PC-9 (cell line): ENCODE measurements at regions of chr11 and their contacts with region 1.

Region 1: DNA sequence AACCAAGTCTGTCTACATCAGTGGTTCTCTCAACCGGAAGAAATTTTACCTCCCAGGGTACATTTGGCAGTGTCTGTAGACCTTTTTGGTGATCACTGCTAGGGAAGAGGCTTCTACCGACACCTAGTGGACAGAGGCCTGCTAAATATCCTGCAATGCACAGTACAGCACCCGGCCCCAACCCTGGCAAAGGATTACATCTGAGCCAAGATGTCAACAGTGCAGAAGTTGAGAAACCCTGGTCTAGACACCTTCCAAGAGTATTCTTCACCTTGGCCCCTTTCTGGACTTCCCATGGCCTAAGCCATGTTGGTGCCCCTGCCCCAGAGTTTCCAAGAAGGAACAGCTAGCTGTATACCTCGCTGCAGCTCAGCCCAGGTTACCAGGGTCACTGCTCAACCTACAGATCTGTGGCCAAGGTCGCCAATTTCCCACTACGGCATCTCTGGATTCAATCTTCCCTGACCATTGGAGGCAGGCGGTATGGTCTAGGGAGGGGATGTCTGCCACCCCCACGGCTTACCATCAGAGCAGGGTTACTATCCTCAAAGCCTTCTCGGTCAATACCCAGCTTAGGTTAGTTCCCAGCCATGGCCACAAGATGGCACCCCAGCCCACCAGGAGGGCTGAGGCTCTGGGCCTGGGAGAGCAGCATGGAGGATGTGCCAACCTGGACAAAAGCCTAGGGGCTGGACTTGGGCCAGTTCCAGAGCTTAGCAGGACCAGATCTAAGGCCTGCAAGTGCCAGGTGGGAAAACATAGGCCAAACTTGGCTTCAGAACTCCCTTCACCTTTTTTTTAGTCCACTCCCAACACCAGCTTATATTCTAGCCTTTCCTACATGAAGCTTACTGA is 3.7 kb upstream of the KCNC1 start:
- DNase-seq: peak; percentile 56 to 81
- H3K4me3 ChIP-seq: no peak overlapping the region
- H3K27ac ChIP-seq: no peak overlapping the region
- H3K4me1 ChIP-seq: no peaks in the 10 kb centered on the region
- H3K27me3 ChIP-seq: peaks cover 27% of the 10 kb centered on the region
- CTCF ChIP-seq: peak; percentile 89

Region 2: GRCh38 chr11:17598700-17599459 is 132.0 kb before region 1 on chr11:
- CTCF ChIA-PET with region 1: interaction called, 12 read pairs
- POLR2A ChIA-PET with region 1: no interaction called
- intact Hi-C with region 1: loop called (anchors 1 kb)
- DNase-seq: peak in 1 of 2 experiments; percentile 60
- H3K4me3 ChIP-seq: no peak overlapping the region
- H3K27ac ChIP-seq: no peak overlapping the region
- H3K4me1 ChIP-seq: no peaks in the 10 kb centered on the region
- H3K27me3 ChIP-seq: peaks cover 40% of the 10 kb centered on the region
- CTCF ChIP-seq: peak; percentile 96

Region 3: GRCh38 chr11:17827006-17827405 is 96.2 kb after region 1 on chr11:
- CTCF ChIA-PET with region 1: interaction called, 3 read pairs
- POLR2A ChIA-PET with region 1: no interaction called
- intact Hi-C with region 1: loop called (anchors 2 kb)
- DNase-seq: no peak
- H3K4me3 ChIP-seq: no peak overlapping the region
- H3K27ac ChIP-seq: no peak overlapping the region
- H3K4me1 ChIP-seq: no peaks in the 10 kb centered on the region
- H3K27me3 ChIP-seq: no peaks in the 10 kb centered on the region
- CTCF ChIP-seq: no peak; the same call in 1 of the 2 replicates

Region 4: GRCh38 chr11:17846852-17847453 is 116.1 kb after region 1 on chr11:
- CTCF ChIA-PET with region 1: interaction called, 5 read pairs
- POLR2A ChIA-PET with region 1: no interaction called
- intact Hi-C with region 1: loop called (anchors 5 kb)
- DNase-seq: peak in 1 of 2 experiments; percentile 47
- H3K4me3 ChIP-seq: no peak overlapping the region
- H3K27ac ChIP-seq: no peak overlapping the region
- H3K4me1 ChIP-seq: peaks cover 19% of the 10 kb centered on the region
- H3K27me3 ChIP-seq: no peaks in the 10 kb centered on the region
- CTCF ChIP-seq: peak; percentile 43; the same call in 1 of the 2 replicates

Region 5: DNA sequence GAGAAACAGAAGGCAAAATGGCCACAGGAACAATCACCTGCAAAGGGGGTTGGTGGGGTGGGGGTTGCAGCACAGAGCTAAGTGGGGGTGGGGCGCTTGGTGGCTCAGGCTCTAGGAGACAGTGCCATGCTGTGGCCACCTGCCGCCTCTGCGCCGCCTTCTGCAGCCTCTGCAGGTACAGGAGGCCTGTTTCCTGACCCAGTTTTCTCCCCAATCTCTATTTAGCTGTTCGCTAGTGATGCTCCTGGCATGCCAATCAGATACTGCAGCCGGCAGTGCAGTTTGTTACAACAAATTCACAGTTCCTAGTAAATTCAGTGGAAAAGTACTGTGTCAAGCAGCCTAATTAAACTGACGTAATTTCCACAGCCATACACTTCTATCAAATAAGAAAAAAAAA is 175.6 kb after region 1 on chr11:
- CTCF ChIA-PET with region 1: interaction called, 3 read pairs
- POLR2A ChIA-PET with region 1: no interaction called
- intact Hi-C with region 1: loop called (anchors 1 kb)
- DNase-seq: peak in 1 of 2 experiments; percentile 10
- H3K4me3 ChIP-seq: no peak overlapping the region
- H3K27ac ChIP-seq: no peak overlapping the region
- H3K4me1 ChIP-seq: no peaks in the 10 kb centered on the region
- H3K27me3 ChIP-seq: no peaks in the 10 kb centered on the region
- CTCF ChIP-seq: peak; percentile 38; the same call in 1 of the 2 replicates